Activated naive CD4-positive, alpha-beta T cell treated with anti-CD3 and anti-CD28 coated beads for 36 hours (primary cell): ENCODE measurements at regions of chr2 and their contacts with region 1.

Region 1: DNA sequence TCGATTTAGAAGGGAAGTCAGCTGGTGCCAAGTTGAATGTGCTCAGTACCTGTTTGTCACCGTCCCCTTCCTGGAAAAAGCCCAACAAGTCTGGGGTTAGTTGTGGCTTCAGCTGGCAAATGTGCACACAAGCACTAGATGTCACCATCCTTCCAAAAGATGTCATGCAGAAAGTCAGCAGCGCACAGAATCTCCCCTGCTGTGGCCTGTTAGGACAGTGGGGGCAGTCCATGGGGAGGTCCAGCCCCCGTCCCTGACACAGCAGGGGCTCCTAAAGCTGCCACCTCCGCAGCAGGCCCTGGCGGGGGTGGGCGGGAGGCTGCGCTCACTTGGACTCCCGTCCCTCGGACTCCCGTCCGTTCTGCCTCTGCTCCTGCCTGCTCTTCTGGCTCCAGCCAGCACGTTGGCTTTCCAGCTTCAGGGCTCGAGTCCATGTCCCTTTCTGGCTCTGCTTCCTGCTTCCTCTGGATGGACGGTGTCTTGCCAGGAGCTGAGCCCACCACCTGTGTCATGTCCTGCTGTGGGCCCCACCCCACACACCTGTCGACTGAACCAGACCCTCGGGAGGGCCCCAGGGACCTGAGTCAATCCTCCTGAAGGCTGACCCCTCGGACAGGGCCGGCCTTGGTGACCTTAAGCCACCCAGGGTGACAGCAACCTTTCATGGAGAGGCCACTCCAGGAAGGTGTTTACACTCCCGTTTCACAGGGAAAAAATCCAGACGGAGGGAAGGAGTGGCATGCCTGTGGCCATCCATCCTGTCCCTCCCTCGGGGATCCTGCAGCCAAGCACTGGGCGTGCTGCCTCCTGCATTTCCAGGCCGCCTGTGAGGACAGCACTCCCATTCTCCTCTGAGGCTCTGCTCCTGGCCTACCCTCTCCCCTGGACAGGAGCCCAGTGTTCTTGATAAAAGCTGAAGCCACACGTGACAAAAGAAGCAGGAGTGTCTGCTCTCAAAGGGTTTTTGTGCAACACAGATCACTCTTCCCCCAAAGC is 8.5 kb downstream of the RAB17 start:
- DNase-seq: peak; percentile 87
- H3K4me3 Mint-ChIP-seq: no peak overlapping the region
- H3K27ac Mint-ChIP-seq: peak overlapping the region; percentile 56
- H3K4me1 Mint-ChIP-seq: peaks cover 4% of the 10 kb centered on the region
- H3K27me3 Mint-ChIP-seq: no peaks in the 10 kb centered on the region

Region 2: GRCh38 chr2:237413777-237414661 is 168.0 kb before region 1 on chr2 and contains the start of gene COL6A3:
- CTCF ChIA-PET with region 1: no interaction called
- intact Hi-C with region 1: no loop called
- DNase-seq: no peak
- H3K4me3 Mint-ChIP-seq: no peak within 1 kb of the TSS
- H3K27ac Mint-ChIP-seq: no peak within 1 kb of the TSS
- H3K4me1 Mint-ChIP-seq: no peaks in the 10 kb centered on the region
- H3K27me3 Mint-ChIP-seq: no peaks in the 10 kb centered on the region
- total RNA-seq, gene COL6A3: 2.5 to 3.0 TPM

Region 3: DNA sequence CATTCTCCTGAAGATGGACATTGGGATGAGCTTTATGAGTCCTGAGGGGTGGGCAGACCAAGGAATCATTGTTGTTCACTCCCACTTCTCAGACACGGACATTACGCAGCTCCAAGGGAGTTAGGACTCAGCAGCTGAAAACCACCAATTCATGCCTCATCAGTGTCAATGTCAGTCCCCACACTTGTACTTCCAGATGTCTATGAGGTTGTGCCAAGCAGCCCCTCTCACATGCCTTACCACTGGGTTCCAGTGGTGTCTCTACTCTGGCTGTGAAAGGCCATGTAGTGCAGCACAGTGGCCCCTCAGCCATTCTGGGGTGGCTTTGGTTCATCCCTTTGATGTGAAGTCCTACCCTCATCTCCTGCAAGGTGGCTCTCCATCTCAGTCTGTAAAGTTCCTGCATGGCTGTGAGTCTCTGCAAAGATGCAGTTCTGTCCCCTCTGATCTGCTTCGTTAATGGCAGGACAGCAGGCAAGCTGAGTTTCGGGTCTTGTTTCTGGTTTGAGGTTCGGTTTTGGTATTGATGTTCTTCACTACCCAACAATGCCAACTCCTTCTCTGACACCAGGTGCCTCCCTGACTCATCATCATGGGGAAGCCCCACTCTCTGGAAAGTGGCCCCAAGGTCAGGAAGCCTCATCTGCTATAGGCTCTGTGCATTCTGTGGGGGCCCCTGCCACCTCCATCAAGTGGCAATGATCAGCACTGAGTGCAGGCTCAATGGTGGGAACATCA is 154.1 kb before region 1 on chr2:
- CTCF ChIA-PET with region 1: no interaction called
- intact Hi-C with region 1: loop called (anchors 2 kb)
- DNase-seq: peak; percentile 94
- H3K4me3 Mint-ChIP-seq: no peak overlapping the region
- H3K27ac Mint-ChIP-seq: peak overlapping the region; percentile 72
- H3K4me1 Mint-ChIP-seq: peaks cover 80% of the 10 kb centered on the region
- H3K27me3 Mint-ChIP-seq: peaks cover 7% of the 10 kb centered on the region

Region 4: DNA sequence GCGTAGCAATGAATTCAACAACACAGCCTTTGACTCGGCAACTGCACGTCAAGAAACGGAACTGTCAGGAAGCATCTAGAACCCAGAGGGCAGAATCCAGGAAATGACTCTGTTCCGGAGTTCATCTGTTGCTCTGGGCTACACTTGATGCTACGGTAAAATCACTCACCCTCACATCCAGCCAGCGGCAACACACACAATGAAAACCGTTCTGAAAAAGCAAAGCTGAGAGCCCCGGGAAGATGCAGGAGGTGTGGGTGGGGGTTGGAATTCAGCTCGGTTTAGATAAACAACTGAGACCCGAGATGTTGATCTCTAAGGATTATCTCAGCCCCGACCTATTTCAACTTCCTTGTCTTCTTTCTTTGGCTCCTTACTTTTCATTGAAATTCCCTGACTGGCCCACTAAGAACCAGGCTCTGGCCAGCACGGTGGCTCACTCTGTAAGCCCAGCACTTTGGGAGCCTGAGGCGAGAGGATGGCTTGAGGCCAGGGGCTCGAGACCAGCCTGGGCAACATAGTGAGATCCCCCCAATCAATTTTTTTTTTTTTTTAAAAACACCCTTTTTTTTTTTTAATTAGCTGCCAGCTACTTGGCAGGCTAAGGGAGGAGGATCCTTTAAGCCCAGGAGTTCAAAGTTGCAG is 21.8 kb after region 1 on chr2:
- CTCF ChIA-PET with region 1: interaction called, 4 read pairs
- intact Hi-C with region 1: loop called (anchors 1 kb)
- DNase-seq: peak; percentile 82
- H3K4me3 Mint-ChIP-seq: peak overlapping the region; percentile 20
- H3K27ac Mint-ChIP-seq: peak overlapping the region; percentile 68
- H3K4me1 Mint-ChIP-seq: peaks cover 18% of the 10 kb centered on the region
- H3K27me3 Mint-ChIP-seq: no peaks in the 10 kb centered on the region

Region 5: GRCh38 chr2:237744613-237745249 is 162.7 kb after region 1 on chr2:
- CTCF ChIA-PET with region 1: interaction called, 24 read pairs
- intact Hi-C with region 1: loop called (anchors 1 kb)
- DNase-seq: peak; percentile 86
- H3K4me3 Mint-ChIP-seq: no peak overlapping the region
- H3K27ac Mint-ChIP-seq: peak overlapping the region; percentile 76
- H3K4me1 Mint-ChIP-seq: peaks cover 36% of the 10 kb centered on the region
- H3K27me3 Mint-ChIP-seq: no peaks in the 10 kb centered on the region

Region 6: DNA sequence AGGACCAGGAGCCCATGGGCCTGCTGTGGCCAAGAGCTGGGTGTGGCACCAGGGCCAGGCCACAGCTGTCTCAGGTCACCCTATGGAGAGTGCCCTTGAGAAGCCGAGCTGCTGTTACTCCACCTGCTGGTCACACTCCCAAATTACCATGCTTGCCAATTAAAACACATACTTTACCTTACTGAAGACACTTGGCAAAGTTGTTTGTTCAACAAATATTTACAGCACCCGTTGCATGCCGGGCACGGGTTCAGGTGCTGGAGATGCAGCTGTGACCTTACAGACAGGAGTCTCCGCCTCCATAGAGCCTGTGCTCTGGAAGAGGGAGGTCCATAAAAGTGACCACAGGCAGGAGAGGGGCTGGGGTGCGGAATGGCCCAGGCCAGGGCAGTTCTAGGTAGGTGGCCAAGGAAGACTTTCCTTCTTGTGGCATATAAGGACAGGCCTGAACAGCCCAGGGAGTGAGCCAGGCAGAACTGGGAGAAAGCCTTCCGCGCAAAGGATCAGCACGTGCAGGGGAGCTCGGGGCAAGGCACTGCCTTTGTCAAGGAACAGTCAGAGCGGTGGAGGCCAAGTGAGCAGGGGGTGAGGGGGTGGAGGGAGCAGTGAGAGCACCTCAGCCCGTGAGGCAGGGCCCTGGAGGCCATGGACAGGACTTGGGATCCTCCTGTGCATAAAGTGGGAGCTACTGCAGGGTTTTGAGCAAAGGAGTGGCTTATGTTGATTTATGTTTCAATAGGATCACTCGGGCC is 192.9 kb after region 1 on chr2:
- CTCF ChIA-PET with region 1: interaction called, 9 read pairs
- intact Hi-C with region 1: loop called (anchors 1 kb)
- DNase-seq: peak; percentile 70
- H3K4me3 Mint-ChIP-seq: no peak overlapping the region
- H3K27ac Mint-ChIP-seq: no peak overlapping the region
- H3K4me1 Mint-ChIP-seq: no peaks in the 10 kb centered on the region
- H3K27me3 Mint-ChIP-seq: no peaks in the 10 kb centered on the region

Region 7: GRCh38 chr2:238263204-238264071 is 681.4 kb after region 1 on chr2:
- CTCF ChIA-PET with region 1: interaction called, 5 read pairs
- intact Hi-C with region 1: loop called (anchors 1 kb)
- DNase-seq: peak; percentile 89
- H3K4me3 Mint-ChIP-seq: no peak overlapping the region
- H3K27ac Mint-ChIP-seq: no peak overlapping the region
- H3K4me1 Mint-ChIP-seq: peaks cover 3% of the 10 kb centered on the region
- H3K27me3 Mint-ChIP-seq: no peaks in the 10 kb centered on the region

Region 8: GRCh38 chr2:238615187-238615586 is 1033.1 kb after region 1 on chr2:
- CTCF ChIA-PET with region 1: no interaction called
- intact Hi-C with region 1: no loop called
- DNase-seq: no peak
- H3K4me3 Mint-ChIP-seq: no peak overlapping the region
- H3K27ac Mint-ChIP-seq: no peak overlapping the region
- H3K4me1 Mint-ChIP-seq: no peaks in the 10 kb centered on the region
- H3K27me3 Mint-ChIP-seq: peaks cover 8% of the 10 kb centered on the region